ENCODE measurements at regions of chr2 and their contacts with region 1.

Region 1: GRCh38 chr2:202375609-202376408 is at the start of gene BMPR2:
- DNase-seq: peak; percentile 91 to 94 (median 92)
- ATAC-seq: peak; percentile 79 to 93 (median 88)
- H3K4me3 ChIP-seq: peak within 1 kb of the TSS; percentile 64 to 99 (median 85)
- H3K27ac ChIP-seq: peak within 1 kb of the TSS; percentile 92 to 100 (median 98)
- H3K4me1 ChIP-seq: peaks cover 0 to 40% (median 11%) of the 10 kb centered on the region in 12 donors
- H3K27me3 ChIP-seq: no peaks in the 10 kb centered on the region
- CTCF ChIP-seq: no peak
- POLR2A ChIP-seq: peak in 1 of 2 donors; percentile 83
- total RNA-seq, gene BMPR2: 44.4 to 81.9 (median 66.1) TPM

Region 2: DNA sequence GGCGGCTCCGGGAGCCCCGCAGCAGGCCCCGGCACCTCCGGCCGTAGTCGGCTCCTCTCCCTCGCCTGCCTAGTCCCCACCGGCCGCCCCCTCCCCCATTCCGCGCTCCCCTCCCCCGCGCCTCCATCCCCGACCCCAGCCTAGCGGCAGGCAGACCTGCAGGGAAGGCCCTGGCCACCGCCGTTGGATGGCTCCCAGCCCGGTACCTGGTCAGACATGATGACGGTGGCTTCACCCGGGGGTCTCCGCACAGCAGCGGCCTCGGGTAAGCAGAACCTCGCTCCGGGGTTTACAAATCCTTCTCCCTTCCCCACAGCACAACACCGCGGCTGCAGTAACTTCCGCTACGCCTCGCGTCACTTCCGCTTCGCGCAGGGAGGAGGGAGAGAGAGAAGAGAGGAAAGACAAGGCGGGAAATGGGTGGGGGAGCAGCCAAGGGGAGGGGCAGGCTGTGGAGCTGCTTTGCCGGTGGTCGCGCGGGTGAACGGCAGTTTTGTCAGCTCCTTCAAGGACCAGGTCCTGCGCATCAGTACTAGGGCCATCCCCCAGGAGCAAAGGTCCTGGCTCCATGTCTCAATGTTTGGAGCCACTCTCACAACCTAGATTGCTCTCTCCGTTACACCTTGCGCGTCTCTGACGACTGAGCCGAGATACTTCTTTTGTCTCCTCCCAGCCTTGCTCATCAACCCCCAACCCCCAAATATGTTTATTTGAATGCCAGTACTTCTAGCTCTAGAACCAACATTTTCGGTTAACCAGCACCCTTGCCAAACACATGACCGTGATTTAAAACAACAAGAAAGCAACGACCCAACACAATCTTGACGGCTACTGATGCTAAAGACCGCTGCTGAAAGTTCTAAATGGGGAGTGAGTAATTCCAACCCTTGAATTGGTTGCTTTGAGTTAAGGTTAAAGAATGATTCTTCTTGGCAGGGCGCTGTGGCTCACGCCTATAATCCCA is 137.3 kb before region 1 on chr2 and contains the start of gene SUMO1:
- intact Hi-C with region 1: loop called in 1 of 10 experiments (anchors 5 kb)
- DNase-seq: peak; percentile 90 to 95 (median 91)
- ATAC-seq: peak; percentile 90 to 98 (median 97)
- H3K4me3 ChIP-seq: peak within 1 kb of the TSS; percentile 81 to 99 (median 96)
- H3K27ac ChIP-seq: peak within 1 kb of the TSS; percentile 70 to 95 (median 90)
- H3K4me1 ChIP-seq: peaks cover 3 to 38% (median 24%) of the 10 kb centered on the region in 12 donors
- H3K27me3 ChIP-seq: no peaks in the 10 kb centered on the region
- CTCF ChIP-seq: no peak
- POLR2A ChIP-seq: peak in 1 of 2 donors; percentile 51
- total RNA-seq, gene SUMO1: 43.5 to 75.2 (median 65.3) TPM

Region 3: GRCh38 chr2:202251494-202251893 is 124.3 kb before region 1 on chr2:
- intact Hi-C with region 1: no loop called
- DNase-seq: no peak
- ATAC-seq: peak in 2 of 4 donors; percentile 51 to 73
- H3K4me3 ChIP-seq: no peak overlapping the region
- H3K27ac ChIP-seq: peak overlapping the region in 1 of 12 donors; percentile 10
- H3K4me1 ChIP-seq: no peaks in the 10 kb centered on the region
- H3K27me3 ChIP-seq: no peaks in the 10 kb centered on the region
- CTCF ChIP-seq: no peak
- POLR2A ChIP-seq: no peak

Region 4: DNA sequence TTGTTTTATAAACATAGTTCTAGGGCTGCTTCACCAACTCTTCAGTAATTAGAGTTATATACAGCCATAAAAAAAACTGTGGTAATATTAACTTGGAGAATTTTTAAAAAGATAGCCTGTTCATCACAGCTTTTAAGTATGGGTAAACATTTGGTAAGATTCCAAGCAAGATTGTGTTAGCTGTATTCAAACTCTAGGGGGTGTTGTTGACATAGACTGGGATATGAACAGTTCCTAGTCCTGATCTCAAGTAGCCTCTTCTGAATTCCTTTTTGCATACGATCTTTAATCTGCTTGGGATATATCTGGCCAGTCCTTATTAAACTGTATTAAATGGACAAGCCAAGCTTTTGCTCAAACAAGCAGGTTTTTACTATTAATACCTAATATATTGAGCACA is 96.9 kb before region 1 on chr2:
- intact Hi-C with region 1: loop called in 5 of 10 experiments (anchors 2 to 10 kb)
- DNase-seq: no peak
- ATAC-seq: peak; percentile 49 to 78 (median 68)
- H3K4me3 ChIP-seq: no peak overlapping the region
- H3K27ac ChIP-seq: peak overlapping the region in 2 of 12 donors; percentile 0 to 46
- H3K4me1 ChIP-seq: peaks cover 0 to 31% (median 9%) of the 10 kb centered on the region in 12 donors
- H3K27me3 ChIP-seq: no peaks in the 10 kb centered on the region
- CTCF ChIP-seq: peak; percentile 41 to 80 (median 63)
- POLR2A ChIP-seq: no peak

Region 5: DNA sequence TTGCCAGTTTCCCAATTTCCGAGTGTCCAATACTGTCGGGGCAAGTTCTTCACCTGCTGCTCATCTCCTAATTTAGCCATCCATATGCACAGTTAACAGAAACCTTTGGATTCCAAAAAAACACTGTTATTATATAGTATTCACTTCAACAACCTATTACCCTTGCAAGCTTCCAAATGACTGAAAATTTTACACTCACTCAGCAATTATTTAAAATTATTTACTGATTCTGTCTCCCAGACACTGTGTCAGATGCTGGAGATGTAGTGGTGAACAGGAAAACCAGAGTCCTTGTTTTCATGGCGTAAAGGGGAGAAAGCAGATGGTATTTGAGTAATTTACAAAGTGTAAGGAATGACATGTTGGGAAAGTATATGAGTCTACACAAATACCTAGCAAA is 53.4 kb before region 1 on chr2:
- intact Hi-C with region 1: loop called in 9 of 10 experiments (anchors 1 to 10 kb)
- DNase-seq: no peak
- ATAC-seq: no peak
- H3K4me3 ChIP-seq: no peak overlapping the region
- H3K27ac ChIP-seq: no peak overlapping the region
- H3K4me1 ChIP-seq: peaks cover 0 to 12% (median 6%) of the 10 kb centered on the region in 12 donors
- H3K27me3 ChIP-seq: no peaks in the 10 kb centered on the region
- CTCF ChIP-seq: no peak
- POLR2A ChIP-seq: no peak

Region 6: DNA sequence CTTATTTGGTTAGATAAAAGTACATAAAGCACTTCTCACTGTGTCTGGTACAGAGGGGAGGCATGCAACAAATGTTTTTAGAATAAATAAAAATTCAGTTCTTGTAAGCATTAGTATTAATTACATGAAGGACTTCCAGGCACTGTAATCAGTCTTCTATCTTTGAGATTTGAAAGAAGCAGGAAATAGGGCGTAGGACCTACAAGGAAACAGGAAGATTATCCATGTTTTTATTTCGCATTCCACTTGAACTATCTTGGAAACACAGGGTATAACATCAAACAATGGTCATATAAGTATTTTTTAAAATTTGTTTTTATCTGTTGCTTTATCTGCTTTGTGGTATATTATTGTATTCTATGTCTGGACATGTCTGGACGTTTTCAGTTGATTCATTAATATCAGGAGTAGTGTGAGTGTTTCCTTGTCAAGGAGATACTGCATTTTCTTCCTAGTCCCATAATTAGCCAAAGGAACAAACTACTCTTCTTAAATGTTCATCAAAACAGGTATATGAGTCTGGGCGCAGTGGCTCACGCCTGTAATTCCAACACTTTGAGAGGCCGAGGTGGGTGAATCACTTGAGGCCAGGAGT is 32.8 kb after region 1 on chr2:
- intact Hi-C with region 1: no loop called
- DNase-seq: no peak
- ATAC-seq: no peak
- H3K4me3 ChIP-seq: no peak overlapping the region
- H3K27ac ChIP-seq: peak overlapping the region in 5 of 12 donors; percentile 13 to 34 (median 22)
- H3K4me1 ChIP-seq: peaks cover 0 to 41% (median 11%) of the 10 kb centered on the region in 12 donors
- H3K27me3 ChIP-seq: no peaks in the 10 kb centered on the region
- CTCF ChIP-seq: no peak
- POLR2A ChIP-seq: no peak

Region 7: GRCh38 chr2:202450785-202451184 is 75.0 kb after region 1 on chr2:
- intact Hi-C with region 1: loop called in 2 of 10 experiments (anchors 5 to 10 kb)
- DNase-seq: no peak
- ATAC-seq: peak in 3 of 4 donors; percentile 30 to 63 (median 41)
- H3K4me3 ChIP-seq: no peak overlapping the region
- H3K27ac ChIP-seq: peak overlapping the region in 9 of 12 donors; percentile 2 to 46 (median 23)
- H3K4me1 ChIP-seq: peaks cover 0 to 36% (median 12%) of the 10 kb centered on the region in 12 donors
- H3K27me3 ChIP-seq: no peaks in the 10 kb centered on the region
- CTCF ChIP-seq: no peak
- POLR2A ChIP-seq: no peak

Region 8: DNA sequence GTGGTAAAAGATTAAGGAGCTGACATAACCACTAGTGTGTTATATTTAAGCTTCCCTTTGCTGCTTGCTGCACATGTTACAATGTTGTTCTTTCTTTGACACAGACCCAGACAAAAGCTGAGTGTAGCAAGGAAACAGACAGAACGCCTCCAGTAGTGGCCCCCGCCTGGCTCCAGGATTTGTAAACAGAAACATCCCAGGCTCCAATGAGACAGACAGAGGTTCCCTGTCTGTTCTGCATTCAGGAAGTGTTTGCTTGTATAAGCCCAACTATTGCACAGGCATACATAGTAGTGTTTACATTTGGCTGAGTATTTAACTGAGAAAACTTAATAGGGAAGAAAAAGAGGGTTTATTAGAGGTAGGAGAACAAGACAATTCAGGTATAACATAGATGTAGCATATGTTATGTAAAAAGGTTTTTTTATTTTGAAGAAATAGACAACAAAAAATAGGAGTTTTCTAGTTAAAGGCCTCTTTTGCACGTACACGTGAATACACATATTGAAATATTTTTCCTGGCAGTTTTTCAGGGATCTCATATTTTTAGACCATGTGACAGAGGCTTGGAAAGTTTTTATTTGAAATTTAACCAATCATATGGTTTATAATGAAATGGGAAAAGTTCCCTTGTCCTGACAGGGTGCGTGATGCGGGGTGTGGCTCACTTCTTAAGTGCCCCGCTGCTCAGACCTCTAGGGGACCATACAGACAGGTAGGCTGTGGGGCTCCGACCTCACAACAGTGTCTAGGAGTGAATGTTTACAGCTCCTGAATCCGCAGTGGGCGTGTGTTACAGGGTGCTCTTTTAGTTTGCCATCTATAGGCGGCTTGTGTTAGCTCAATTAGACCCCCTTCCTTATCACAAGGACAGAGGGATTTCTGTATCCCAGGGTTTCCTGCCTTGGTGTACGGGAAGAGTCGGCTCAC is 118.8 kb after region 1 on chr2:
- intact Hi-C with region 1: loop called in 4 of 10 experiments (anchors 5 to 10 kb)
- DNase-seq: no peak
- ATAC-seq: peak in 3 of 4 donors; percentile 61 to 72 (median 69)
- H3K4me3 ChIP-seq: no peak overlapping the region
- H3K27ac ChIP-seq: no peak overlapping the region
- H3K4me1 ChIP-seq: peaks cover 0 to 51% (median 20%) of the 10 kb centered on the region in 12 donors
- H3K27me3 ChIP-seq: no peaks in the 10 kb centered on the region
- CTCF ChIP-seq: no peak
- POLR2A ChIP-seq: no peak

Region 9: DNA sequence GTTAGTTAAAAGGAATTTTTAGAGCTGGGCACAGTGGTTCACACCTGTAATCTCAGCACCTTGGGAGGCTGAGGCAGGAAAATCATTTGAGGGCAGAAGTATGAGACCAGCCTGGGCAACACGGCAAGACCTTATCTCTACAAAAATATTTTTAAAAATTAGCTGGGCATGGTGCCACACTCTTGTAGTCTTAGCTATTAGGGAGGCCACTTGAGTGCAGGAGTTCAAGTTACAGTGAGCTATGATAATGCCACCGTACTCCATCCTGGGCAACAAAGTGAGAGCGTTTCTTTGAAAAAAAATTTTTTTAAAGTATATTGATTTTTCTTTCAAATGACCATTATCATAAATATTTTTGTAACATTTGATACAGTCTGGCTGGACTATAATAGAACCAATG is 165.3 kb after region 1 on chr2:
- intact Hi-C with region 1: loop called in 3 of 10 experiments (anchors 5 to 10 kb)
- DNase-seq: no peak
- ATAC-seq: peak; percentile 80 to 91 (median 86)
- H3K4me3 ChIP-seq: no peak overlapping the region
- H3K27ac ChIP-seq: no peak overlapping the region
- H3K4me1 ChIP-seq: peaks cover 0 to 33% (median 18%) of the 10 kb centered on the region in 12 donors
- H3K27me3 ChIP-seq: no peaks in the 10 kb centered on the region
- CTCF ChIP-seq: no peak
- POLR2A ChIP-seq: no peak

Region 10: DNA sequence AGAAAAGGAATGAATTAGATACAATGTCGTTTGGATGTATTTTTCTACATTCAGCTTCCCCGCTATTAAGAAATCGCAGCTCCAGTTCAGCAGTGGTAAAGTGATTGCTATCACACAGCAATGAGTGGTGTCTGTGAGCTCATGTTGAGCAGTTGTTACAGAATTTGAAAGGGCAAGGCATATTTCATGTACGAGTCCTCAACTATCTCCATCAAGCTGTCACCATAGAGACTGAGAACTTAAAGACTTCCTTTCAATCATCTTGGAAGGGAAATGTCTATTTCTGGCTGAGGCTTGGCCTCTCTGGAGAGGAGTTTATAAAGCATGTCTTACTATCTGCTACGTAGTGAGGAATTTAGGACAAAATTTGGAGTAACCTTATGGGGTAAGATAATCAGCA is 234.6 kb after region 1 on chr2:
- intact Hi-C with region 1: no loop called
- DNase-seq: no peak
- ATAC-seq: no peak
- H3K4me3 ChIP-seq: no peak overlapping the region
- H3K27ac ChIP-seq: peak overlapping the region in 1 of 12 donors; percentile 79
- H3K4me1 ChIP-seq: peaks cover 0 to 30% (median 0%) of the 10 kb centered on the region in 12 donors
- H3K27me3 ChIP-seq: no peaks in the 10 kb centered on the region
- CTCF ChIP-seq: no peak
- POLR2A ChIP-seq: no peak